Activated CD4-positive, alpha-beta T cell treated with anti-CD3 and anti-CD28 coated beads for 36 hours (primary cell): ENCODE measurements at regions of chr2 and their contacts with region 1.

Region 1: DNA sequence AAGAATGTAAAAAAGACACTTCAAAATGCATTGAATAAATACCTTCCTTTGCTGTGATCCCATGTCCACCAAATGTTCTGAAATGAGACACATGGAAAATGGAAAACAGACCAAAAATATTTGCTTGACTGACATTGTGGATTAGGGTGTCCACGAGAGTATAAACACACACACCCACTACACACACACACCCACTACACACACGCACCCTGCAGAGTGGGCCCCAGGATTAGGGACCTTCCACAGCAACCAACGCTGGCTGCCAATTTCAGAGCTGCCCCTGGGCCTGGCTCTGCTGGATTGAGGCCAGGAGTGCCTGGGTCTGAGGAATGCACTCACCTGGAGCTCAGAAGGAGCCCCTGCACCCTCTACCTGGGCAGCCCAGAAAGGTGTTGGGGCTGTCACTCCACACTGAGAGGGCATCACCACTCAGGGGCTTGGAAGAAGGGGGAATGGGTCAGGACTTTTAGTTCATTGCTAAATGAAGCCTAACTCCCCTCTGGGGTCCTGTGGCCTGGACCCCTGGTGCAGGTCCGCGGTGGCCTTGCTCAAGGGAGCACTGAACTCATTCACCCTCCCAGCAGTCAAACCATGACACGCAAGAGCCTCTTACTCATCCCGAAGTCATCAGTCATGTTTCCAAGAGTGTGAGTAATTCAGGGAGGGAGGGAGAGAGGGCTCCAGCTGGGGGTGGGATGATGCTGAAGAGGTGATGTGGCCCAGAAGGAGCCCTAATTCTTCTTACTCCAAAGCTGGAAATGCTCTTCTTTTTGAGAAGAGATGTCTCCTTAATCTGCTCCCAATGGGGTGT is 50.2 kb upstream of the PLB1 start:
- DNase-seq: peak; percentile 85
- ATAC-seq: peak; percentile 70
- H3K4me3 Mint-ChIP-seq: peak overlapping the region; percentile 53
- H3K27ac Mint-ChIP-seq: peak overlapping the region; percentile 97
- H3K4me1 Mint-ChIP-seq: peaks cover 81% of the 10 kb centered on the region
- H3K27me3 Mint-ChIP-seq: no peaks in the 10 kb centered on the region

Region 2: GRCh38 chr2:27428213-27428977 is 1017.3 kb before region 1 on chr2 and contains the start of gene NRBP1:
- CTCF ChIA-PET with region 1: no interaction called
- POLR2A ChIA-PET with region 1: no interaction called
- intact Hi-C with region 1: loop called in 1 of 2 experiments (anchors 2 kb)
- DNase-seq: peak; percentile 97
- ATAC-seq: peak; percentile 85
- H3K4me3 Mint-ChIP-seq: peak within 1 kb of the TSS; percentile 100
- H3K27ac Mint-ChIP-seq: peak within 1 kb of the TSS; percentile 98
- H3K4me1 Mint-ChIP-seq: peaks cover 37% of the 10 kb centered on the region
- H3K27me3 Mint-ChIP-seq: no peaks in the 10 kb centered on the region
- total RNA-seq, gene NRBP1: 74.3 to 74.4 TPM

Region 3: GRCh38 chr2:27723372-27724144 is 722.1 kb before region 1 on chr2:
- CTCF ChIA-PET with region 1: no interaction called
- POLR2A ChIA-PET with region 1: no interaction called
- intact Hi-C with region 1: loop called in 1 of 2 experiments (anchors 5 kb)
- DNase-seq: peak; percentile 57
- ATAC-seq: no peak
- H3K4me3 Mint-ChIP-seq: no peak overlapping the region
- H3K27ac Mint-ChIP-seq: no peak overlapping the region
- H3K4me1 Mint-ChIP-seq: peaks cover 30% of the 10 kb centered on the region
- H3K27me3 Mint-ChIP-seq: no peaks in the 10 kb centered on the region

Region 4: DNA sequence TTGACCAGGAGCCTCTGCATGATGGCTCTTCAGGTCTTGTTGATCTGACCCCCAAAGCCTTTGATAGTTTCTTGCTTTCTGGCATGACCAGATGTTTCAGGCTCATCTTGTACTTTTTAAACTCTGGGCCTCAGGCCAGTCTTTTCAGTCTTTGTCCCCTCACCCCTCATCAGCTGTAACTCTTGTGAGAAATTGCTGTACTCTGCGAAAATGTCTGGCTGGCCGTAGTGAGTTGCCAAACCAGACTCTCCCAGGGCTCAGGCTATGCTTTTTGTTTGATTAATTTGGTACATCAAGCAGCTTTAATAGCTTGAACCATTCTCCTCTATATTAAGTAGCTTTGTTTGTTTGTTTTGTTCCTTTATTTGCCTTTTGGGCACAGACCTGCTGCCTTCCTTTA is 479.2 kb before region 1 on chr2:
- CTCF ChIA-PET with region 1: no interaction called
- POLR2A ChIA-PET with region 1: no interaction called
- intact Hi-C with region 1: loop called in 1 of 2 experiments (anchors 5 kb)
- DNase-seq: no peak
- ATAC-seq: no peak
- H3K4me3 Mint-ChIP-seq: no peak overlapping the region
- H3K27ac Mint-ChIP-seq: peak overlapping the region; percentile 17
- H3K4me1 Mint-ChIP-seq: peaks cover 55% of the 10 kb centered on the region
- H3K27me3 Mint-ChIP-seq: no peaks in the 10 kb centered on the region

Region 5: GRCh38 chr2:28160986-28161425 is 284.6 kb before region 1 on chr2:
- CTCF ChIA-PET with region 1: no interaction called
- POLR2A ChIA-PET with region 1: no interaction called
- intact Hi-C with region 1: no loop called
- DNase-seq: no peak
- ATAC-seq: no peak
- H3K4me3 Mint-ChIP-seq: no peak overlapping the region
- H3K27ac Mint-ChIP-seq: no peak overlapping the region
- H3K4me1 Mint-ChIP-seq: no peaks in the 10 kb centered on the region
- H3K27me3 Mint-ChIP-seq: no peaks in the 10 kb centered on the region

Region 6: DNA sequence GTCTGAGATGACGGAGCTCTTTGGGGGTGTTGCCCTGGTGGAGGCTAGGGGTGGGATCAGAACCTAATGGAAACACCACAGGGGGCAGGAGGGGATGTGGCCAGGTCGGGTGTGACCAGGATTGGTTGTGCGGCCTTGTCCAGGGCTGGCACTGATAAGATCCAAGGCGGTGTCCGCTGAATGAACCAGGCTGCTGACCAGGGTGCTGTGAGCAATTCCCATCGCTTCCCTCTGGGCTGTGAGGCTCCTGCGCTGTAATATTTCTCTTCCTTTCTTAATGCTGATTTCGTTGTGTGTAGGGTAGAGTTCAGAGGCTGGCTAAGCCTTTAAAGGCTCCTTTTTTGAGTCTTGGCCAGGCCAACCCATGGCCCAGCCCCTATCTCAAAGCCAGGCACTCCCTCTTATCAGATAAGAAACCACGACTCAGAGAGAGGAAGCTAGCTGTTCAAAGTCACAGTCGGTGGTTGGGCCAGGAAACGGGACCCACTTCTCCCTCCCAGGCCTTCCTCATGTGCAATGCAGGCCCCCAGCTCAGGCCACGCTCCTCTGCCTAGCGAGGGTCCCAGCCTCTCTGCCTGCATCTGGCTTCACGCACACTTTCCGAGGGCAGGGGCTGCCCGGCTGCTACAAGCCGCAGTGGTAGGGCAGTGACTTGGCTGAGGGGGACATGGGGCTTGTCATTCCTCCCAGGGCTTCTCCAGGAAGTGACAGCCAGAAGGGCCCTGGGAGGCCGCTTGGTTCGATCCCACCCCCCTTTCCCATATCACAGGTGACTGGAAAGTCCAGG is 79.0 kb before region 1 on chr2:
- CTCF ChIA-PET with region 1: no interaction called
- POLR2A ChIA-PET with region 1: no interaction called
- intact Hi-C with region 1: no loop called
- DNase-seq: peak; percentile 64
- ATAC-seq: peak; percentile 84
- H3K4me3 Mint-ChIP-seq: peak overlapping the region; percentile 30
- H3K27ac Mint-ChIP-seq: peak overlapping the region; percentile 90
- H3K4me1 Mint-ChIP-seq: peaks cover 57% of the 10 kb centered on the region
- H3K27me3 Mint-ChIP-seq: peaks cover 4% of the 10 kb centered on the region

Region 7: DNA sequence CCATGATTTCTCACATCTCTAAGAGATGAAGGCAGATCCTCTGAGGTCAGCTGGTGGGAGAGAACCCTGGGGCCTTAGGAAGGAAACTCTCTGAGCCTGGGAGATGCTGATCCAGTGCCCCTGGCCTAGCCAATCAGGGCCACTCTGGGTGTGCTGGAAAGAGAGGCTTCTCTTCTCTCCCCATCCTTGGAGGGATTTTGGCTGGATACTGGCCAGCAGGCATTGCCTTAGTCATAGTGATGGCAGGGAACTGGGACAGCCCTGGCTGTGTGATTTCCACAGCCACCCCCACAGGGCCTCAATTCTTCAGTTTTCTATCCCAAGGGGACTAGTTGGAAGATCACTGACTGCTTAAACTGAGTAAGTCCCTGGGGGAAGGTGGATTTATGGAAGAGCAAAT is 23.7 kb after region 1 on chr2:
- CTCF ChIA-PET with region 1: no interaction called
- POLR2A ChIA-PET with region 1: no interaction called
- intact Hi-C with region 1: loop called (anchors 1 kb)
- DNase-seq: no peak
- ATAC-seq: no peak
- H3K4me3 Mint-ChIP-seq: no peak overlapping the region
- H3K27ac Mint-ChIP-seq: no peak overlapping the region
- H3K4me1 Mint-ChIP-seq: peaks cover 50% of the 10 kb centered on the region
- H3K27me3 Mint-ChIP-seq: peaks cover 3% of the 10 kb centered on the region